ENCODE measurements at regions of chr6 and their contacts with region 1.

Region 1: GRCh38 chr6:154805288-154805911 is 72.2 kb downstream of the SCAF8 start:
- DNase-seq: no peak
- H3K4me3 ChIP-seq: no peak overlapping the region
- H3K27ac ChIP-seq: no peak overlapping the region
- H3K4me1 ChIP-seq: no peaks in the 10 kb centered on the region
- H3K27me3 ChIP-seq: no peaks in the 10 kb centered on the region
- CTCF ChIP-seq: peak in 2 of 3 experiments; percentile 15 to 30
- POLR2A ChIP-seq: no peak

Region 2: DNA sequence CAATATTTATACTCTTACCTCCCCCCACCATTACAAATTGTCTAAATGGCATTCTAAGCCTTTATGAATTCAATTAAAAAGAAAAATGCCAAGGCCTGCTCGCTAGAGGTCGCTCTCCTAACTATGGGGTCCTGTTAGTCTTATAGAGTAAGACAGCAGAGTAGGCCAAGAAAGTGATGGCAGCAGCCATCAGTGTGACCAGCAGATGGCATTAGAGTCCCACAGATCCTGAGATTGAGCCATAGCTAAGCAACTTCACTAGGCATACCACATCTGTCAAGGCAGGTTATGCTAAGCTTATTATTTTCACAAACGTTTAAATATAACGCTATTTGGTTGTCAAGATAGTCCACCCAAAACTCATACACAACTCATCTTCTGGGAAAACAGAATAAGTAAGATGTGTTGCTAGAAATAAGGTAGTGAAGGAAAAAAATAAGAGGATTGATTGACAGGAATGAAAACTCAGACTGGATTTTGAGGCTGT is 129.8 kb before region 1 on chr6:
- intact Hi-C with region 1: loop called (anchors 10 kb)
- DNase-seq: peak in 1 of 2 donors; percentile 92
- H3K4me3 ChIP-seq: no peak overlapping the region
- H3K27ac ChIP-seq: no peak overlapping the region
- H3K4me1 ChIP-seq: no peaks in the 10 kb centered on the region
- H3K27me3 ChIP-seq: no peaks in the 10 kb centered on the region
- CTCF ChIP-seq: peak; percentile 96 to 99 (median 99)
- POLR2A ChIP-seq: no peak

Region 3: GRCh38 chr6:154733012-154733625 is 72.3 kb before region 1 on chr6 and contains the start of gene SCAF8:
- intact Hi-C with region 1: loop called (anchors 10 kb)
- DNase-seq: no peak
- H3K4me3 ChIP-seq: peak within 1 kb of the TSS; percentile 68 to 99
- H3K27ac ChIP-seq: peak within 1 kb of the TSS; percentile 98
- H3K4me1 ChIP-seq: peaks cover 47% of the 10 kb centered on the region
- H3K27me3 ChIP-seq: no peaks in the 10 kb centered on the region
- CTCF ChIP-seq: peak; percentile 29 to 74 (median 51)
- POLR2A ChIP-seq: peak in 1 of 2 donors; percentile 31
- total RNA-seq, gene SCAF8: 37.8 TPM

Measured in vagina (tissue), 2 donors.